AG04449 (cell line): ENCODE measurements at regions of chr12 and their contacts with region 1.

Region 1: GRCh38 chr12:56224102-56224701 is at the start of gene NABP2:
- DNase-seq: peak; percentile 75
- H3K4me3 ChIP-seq: peak within 1 kb of the TSS; percentile 78
- CTCF ChIP-seq: peak; percentile 96

Region 2: DNA sequence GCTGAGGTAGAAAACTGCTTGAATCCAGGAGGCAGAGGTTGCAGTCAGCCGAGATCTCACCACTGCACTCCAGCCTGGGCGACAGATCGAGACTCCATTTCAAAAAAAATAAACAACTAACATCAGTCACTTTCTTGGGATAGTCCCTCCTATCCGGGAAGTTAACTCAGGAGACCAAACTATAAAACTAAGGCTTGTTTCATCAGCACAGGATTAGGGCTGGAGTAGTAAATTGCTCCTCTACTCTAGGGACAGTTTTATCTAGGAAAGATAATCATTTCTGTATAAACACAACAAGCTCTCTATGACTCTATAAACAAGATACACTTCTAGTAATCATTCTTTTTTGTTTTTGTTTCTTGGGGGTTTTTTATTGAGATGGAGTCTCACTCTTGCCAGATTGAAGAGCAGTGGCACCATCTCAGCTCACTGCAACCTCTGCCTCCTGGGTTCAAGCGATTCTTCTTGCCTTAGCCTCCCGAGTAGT is 170.8 kb before region 1 on chr12:
- CTCF ChIA-PET with region 1: no interaction called
- POLR2A ChIA-PET with region 1: no interaction called
- DNase-seq: no peak
- H3K4me3 ChIP-seq: no peak overlapping the region
- CTCF ChIP-seq: no peak

Region 3: DNA sequence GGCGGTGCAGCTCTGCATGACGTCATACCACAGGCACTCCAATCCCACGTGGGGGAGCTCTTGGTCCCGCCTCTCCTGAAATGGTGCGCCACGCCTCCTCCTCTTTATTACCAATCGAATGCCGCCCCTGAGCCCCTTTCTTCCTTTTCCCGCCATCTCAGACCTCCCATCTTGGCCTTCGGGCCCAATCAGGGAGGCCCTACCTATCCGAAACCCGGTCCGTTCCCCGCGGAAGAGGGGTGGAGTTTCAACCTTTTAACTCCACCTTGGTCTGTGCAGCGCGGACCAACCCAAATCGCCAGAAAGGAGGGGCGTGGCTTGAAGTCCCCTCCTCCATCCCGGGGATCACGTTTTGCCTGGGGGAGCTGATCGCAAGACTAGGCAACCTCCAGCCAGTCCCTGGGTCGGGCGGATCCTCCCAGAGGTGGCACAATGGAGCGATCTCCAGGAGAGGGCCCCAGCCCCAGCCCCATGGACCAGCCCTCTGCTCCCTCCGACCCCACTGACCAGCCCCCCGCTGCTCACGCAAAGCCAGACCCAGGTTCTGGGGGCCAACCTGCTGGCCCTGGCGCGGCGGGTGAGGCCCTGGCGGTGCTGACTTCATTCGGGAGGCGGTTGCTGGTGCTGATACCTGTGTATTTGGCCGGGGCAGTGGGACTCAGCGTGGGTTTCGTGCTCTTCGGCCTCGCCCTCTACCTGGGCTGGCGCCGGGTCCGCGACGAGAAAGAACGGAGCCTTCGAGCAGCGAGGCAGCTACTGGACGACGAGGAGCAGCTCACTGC is 96.1 kb before region 1 on chr12 and contains the start of gene ESYT1:
- CTCF ChIA-PET with region 1: interaction called, 14 read pairs
- POLR2A ChIA-PET with region 1: interaction called, 9 read pairs
- DNase-seq: peak; percentile 98
- H3K4me3 ChIP-seq: peak within 1 kb of the TSS; percentile 78
- CTCF ChIP-seq: no peak

Region 4: GRCh38 chr12:56206457-56207166 is 17.6 kb before region 1 on chr12:
- CTCF ChIA-PET with region 1: interaction called, 59 read pairs
- POLR2A ChIA-PET with region 1: interaction called, 16 read pairs
- DNase-seq: no peak
- H3K4me3 ChIP-seq: no peak overlapping the region
- CTCF ChIP-seq: peak; percentile 71

Region 5: DNA sequence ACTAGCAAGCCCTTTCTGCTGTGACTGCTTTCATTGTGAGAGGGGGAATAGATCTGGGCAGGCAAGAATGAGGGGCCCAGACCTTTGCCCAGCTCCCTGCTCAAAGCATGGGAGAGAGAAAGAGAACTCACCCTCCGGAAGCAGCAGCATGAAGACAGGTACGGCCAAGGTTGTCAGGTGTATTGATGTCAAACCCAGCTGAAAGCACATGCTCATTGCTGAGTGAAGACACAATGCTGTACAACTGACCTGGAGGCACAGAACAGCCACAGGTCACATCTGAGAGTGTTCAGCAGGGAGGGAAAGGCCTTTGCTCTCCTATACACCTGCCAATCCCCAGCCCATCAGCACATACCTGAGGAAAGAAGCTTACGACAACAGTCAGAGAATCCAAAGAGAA is 28.4 kb after region 1 on chr12:
- CTCF ChIA-PET with region 1: interaction called, 36 read pairs
- POLR2A ChIA-PET with region 1: interaction called, 19 read pairs
- DNase-seq: no peak
- H3K4me3 ChIP-seq: no peak overlapping the region
- CTCF ChIP-seq: no peak

Region 6: DNA sequence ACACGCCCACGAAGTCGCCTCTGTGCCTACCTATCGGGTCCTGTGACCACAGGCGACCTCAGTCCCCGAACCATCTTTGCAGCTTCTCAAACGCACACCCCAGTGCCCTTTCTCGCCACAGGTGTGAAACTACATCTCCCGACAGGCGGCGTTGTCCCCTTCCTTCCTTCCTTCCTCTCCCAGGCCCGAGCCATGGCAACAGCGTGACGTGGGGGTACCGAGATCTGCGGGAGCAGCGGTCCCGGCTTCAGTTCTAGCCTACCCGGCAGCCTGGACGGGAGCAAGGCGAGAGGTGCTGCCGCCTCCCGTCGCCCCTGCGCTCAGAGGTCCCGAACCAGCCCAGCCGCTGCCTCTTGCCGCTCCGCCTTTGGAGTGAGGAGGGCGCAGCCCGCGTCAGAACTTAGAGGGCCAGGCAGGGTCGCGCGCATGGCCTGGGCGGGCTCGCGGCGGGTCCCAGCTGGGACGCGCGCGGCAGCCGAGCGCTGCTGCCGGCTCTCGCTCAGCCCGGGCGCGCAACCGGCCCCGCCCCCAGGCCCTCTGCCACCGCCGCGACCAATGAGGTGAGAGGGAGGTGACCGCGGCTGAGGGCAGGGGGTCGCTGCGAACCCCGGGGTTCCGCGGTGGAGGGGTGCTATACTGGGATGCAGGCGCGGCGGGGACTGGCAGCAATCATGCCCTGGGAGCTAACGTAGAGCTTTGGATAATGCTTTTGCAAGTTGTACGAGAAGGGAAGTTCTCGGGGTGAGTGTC is 42.7 kb after region 1 on chr12 and contains the start of gene COQ10A:
- CTCF ChIA-PET with region 1: interaction called, 26 read pairs
- POLR2A ChIA-PET with region 1: interaction called, 6 read pairs
- DNase-seq: no peak
- H3K4me3 ChIP-seq: peak within 1 kb of the TSS; percentile 87
- CTCF ChIP-seq: peak; percentile 78